ENCODE measurements at regions of chr1 and their contacts with region 1.

Region 1: GRCh38 chr1:165144757-165145397 is 211.6 kb downstream of the LMX1A start:
- DNase-seq: peak; percentile 81
- H3K4me3 Mint-ChIP-seq: no peak overlapping the region
- H3K27ac Mint-ChIP-seq: no peak overlapping the region
- H3K4me1 Mint-ChIP-seq: peaks cover 6% of the 10 kb centered on the region
- H3K27me3 Mint-ChIP-seq: peaks cover 52% of the 10 kb centered on the region
- CTCF ChIP-seq: peak; percentile 91

Region 2: DNA sequence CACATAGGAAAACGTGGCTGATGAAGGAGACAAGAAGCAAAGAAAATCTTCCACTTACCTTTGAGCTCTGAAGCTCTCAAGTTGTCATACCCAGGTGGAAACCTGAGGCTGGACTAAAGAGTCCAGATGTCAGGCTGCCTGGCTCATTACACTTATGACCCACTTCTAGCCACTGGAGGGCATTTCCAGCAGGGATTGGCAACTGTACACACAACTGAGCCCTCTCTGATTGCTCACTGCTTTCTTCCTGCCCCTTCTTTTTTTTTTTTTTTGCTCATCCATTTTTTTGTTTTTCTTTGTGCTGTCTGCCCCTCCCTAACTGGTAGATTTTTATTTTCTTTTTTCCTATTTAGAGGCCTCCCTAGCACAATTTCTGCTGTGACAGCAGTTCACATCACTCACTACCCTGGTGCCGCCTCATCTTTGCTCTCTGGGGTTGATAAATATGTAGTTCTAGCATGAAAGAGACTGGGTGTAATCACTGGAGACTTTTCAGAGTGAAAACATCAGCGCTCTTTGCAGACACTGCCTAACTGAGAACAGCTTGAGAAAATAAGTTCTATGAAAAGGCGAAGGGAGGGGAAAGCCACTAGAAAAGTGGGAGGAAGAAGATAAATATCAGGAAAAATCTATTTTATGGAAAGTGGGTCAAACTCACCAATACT is 1488.7 kb before region 1 on chr1:
- CTCF ChIA-PET with region 1: no interaction called
- POLR2A ChIA-PET with region 1: no interaction called
- intact Hi-C with region 1: no loop called
- DNase-seq: no peak
- H3K4me3 Mint-ChIP-seq: no peak overlapping the region
- H3K27ac Mint-ChIP-seq: no peak overlapping the region
- H3K4me1 Mint-ChIP-seq: no peaks in the 10 kb centered on the region
- H3K27me3 Mint-ChIP-seq: no peaks in the 10 kb centered on the region
- CTCF ChIP-seq: no peak

Region 3: DNA sequence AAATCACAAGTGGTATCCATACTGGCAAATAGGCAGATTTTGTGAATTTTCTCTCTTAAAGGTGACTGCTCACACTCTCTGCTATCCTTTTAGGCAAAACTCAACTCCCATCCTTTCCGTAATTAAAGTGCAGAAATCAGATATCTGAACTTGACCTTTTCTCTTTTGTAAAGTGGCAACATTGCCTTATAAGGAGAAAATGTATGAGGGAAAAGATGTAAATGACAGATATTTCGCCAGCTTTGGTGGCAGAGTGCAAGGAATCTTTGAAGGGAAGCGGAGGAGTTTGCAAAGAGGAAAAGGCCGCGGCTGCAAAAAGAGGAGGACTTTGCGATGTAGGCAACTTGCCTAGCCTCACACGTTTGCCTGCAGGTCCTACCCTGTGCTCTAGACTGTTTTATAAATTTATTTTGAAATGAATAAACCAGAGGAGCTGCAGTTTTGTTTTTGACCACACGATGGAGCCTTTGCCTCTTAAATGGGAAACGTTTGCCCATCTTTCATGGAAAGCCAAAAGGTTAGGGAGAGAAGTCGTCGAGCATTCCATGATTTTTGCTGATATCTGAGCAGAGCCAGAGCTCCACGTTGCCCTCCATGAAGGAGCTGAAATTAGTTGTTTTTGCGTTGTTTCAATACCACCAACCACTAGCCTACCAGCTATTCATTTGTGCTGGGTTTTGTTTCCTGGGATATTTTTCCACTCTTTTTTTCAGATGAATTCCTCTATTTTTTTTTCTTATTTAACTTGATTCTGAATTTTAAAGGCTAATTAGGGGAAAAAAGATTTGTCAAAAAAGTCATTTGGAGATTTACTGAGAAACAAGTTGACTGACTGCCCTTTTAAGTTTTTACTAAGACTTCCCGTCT is 30.6 kb before region 1 on chr1:
- CTCF ChIA-PET with region 1: interaction called, 135 read pairs
- POLR2A ChIA-PET with region 1: interaction called, 3 read pairs
- intact Hi-C with region 1: loop called (anchors 1 kb)
- DNase-seq: peak; percentile 85
- H3K4me3 Mint-ChIP-seq: no peak overlapping the region
- H3K27ac Mint-ChIP-seq: no peak overlapping the region
- H3K4me1 Mint-ChIP-seq: peaks cover 17% of the 10 kb centered on the region
- H3K27me3 Mint-ChIP-seq: peaks cover 16% of the 10 kb centered on the region
- CTCF ChIP-seq: peak; percentile 96

Region 4: GRCh38 chr1:165162671-165163241 is 17.9 kb after region 1 on chr1:
- CTCF ChIA-PET with region 1: interaction called, 89 read pairs
- POLR2A ChIA-PET with region 1: interaction called, 3 read pairs
- intact Hi-C with region 1: no loop called
- DNase-seq: peak; percentile 81
- H3K4me3 Mint-ChIP-seq: no peak overlapping the region
- H3K27ac Mint-ChIP-seq: no peak overlapping the region
- H3K4me1 Mint-ChIP-seq: no peaks in the 10 kb centered on the region
- H3K27me3 Mint-ChIP-seq: peaks cover 14% of the 10 kb centered on the region
- CTCF ChIP-seq: no peak

Region 5: DNA sequence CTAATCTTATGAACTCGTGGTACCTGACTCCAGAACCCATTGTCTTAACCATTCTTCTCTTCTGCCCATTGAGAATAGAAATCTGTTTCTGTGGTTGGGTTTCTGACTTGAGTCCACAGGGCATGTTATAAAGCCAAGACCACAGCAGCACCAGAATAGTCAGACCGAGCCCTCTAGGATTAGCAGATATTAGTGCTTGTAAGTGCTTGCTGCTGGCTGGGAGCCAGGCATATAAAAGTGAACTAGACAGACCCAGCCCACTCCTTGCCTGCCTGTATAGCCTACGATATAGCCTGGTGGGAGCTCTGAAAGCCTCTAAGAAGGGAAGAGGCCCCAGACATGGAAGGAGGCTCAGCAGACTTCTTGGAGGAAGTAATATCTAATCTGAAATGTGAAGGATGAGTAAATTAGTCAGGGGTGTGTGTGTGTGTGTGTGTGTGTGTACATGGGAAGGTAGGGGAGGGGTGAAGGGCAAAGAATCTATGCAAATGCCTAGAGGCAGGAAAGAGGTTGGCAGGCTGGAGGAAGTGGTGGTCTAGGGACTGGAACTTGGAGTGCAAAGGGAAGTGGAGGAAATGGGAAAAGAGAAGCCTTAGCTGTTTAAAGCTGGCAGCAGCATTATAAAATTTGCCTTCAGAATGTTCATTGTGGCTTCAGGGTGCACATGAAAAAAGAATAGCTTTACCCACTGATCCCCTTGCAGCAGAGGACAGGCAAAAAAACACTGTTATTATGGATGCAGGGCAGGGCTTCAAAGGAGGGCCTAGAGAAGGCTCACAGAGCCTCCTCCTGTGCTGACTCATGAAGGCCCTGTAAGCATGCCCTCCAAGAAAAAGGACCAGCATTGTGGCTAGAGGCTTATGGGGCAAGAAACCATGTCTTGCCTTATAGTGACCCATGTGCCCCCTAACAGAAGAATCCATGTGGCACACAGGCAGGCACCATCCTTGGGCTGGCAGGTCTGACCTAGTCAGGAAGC is 42.4 kb after region 1 on chr1:
- CTCF ChIA-PET with region 1: interaction called, 16 read pairs
- POLR2A ChIA-PET with region 1: no interaction called
- intact Hi-C with region 1: no loop called
- DNase-seq: no peak
- H3K4me3 Mint-ChIP-seq: no peak overlapping the region
- H3K27ac Mint-ChIP-seq: no peak overlapping the region
- H3K4me1 Mint-ChIP-seq: no peaks in the 10 kb centered on the region
- H3K27me3 Mint-ChIP-seq: no peaks in the 10 kb centered on the region
- CTCF ChIP-seq: no peak

Region 6: DNA sequence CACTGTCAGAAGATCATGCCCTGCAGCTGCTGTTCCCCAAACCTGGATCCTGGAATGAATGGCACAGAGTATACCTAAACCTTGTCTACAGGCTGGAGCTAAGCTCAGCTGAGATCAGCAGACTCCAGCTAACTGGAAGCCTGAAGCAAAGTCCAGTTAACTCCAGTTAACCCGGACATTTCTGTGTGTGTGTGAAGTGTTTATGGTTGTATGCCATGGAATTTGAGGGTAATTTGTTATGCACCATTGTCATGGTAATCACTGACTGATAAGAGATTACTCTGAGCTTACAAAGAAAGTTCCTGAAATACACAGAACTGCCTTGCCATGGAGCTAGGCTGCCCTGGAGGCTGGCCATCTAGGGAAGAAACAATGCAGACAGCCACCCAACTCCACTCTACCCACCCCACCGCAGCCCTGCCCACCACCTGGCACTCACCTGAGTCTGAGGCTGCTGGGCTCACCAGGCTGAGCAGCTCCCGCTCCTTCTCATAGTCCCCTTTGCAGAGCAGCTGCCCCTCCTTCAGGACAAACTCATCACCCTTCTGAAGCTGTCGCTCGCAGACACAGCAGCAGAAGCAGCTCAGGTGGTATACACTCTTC is 104.2 kb after region 1 on chr1:
- CTCF ChIA-PET with region 1: interaction called, 16 read pairs
- POLR2A ChIA-PET with region 1: no interaction called
- intact Hi-C with region 1: no loop called
- DNase-seq: no peak
- H3K4me3 Mint-ChIP-seq: no peak overlapping the region
- H3K27ac Mint-ChIP-seq: no peak overlapping the region
- H3K4me1 Mint-ChIP-seq: no peaks in the 10 kb centered on the region
- H3K27me3 Mint-ChIP-seq: peaks cover 48% of the 10 kb centered on the region
- CTCF ChIP-seq: no peak

Region 7: DNA sequence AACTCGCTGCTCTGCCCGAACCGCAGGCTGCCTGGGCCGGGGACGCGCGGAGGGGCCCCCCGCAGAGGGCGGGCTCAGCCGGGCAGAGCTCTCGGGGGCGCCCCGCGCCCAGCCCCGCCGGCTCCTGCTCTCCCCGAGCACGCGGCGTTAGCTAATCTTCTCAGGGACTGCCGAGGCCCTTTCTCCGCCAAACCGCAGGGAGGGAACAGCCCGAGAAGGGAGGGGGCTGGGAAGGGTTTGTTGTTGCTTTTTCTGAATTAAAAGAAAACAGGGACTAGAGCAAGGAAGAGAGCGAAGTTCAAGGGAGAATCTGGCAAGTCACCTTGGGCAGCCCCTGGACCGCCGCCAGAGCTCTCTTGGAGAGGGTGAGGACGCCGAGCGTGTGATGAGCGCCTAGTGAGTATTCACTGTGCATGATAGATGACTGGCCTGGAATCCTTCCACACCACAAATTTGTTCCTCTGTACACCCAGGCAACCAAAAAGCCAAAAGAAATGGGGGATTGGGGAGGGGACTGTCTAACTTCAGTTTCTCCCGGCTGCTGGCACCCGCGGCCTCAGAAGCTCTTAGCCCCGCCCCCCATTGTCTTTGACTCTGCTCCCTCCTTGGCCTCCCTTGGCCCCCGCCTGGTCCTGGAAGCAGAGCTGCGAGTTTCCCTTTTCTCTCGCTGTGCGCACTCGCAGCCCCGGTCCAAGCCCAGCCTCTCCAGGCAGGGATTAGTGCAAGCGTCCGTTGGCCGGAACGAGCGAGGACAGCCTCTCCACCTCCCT is 231.3 kb after region 1 on chr1:
- CTCF ChIA-PET with region 1: interaction called, 334 read pairs
- POLR2A ChIA-PET with region 1: interaction called, 3 read pairs
- intact Hi-C with region 1: no loop called
- DNase-seq: peak; percentile 99
- H3K4me3 Mint-ChIP-seq: peak overlapping the region; percentile 63
- H3K27ac Mint-ChIP-seq: peak overlapping the region; percentile 71
- H3K4me1 Mint-ChIP-seq: peaks cover 20% of the 10 kb centered on the region
- H3K27me3 Mint-ChIP-seq: peaks cover 18% of the 10 kb centered on the region
- CTCF ChIP-seq: no peak

Region 8: DNA sequence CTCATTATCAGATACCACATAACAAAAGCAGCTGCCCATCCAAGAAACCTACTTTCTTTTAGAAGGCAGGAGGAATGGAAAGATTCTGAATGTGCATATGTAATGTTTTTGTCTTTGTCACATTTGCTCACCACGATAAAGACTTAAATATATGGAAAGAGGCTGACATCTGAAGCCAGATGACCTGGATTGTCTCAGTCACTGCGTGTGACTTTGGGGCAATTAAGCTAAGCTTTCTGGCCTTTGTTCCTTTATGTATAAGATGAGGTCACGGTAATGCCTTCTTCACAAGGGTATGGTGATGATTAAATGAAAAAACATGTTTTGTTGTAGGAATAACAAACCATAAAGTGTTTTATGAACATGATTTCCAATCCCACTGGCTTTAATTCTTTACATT is 441.6 kb after region 1 on chr1:
- CTCF ChIA-PET with region 1: interaction called, 26 read pairs
- POLR2A ChIA-PET with region 1: no interaction called
- intact Hi-C with region 1: no loop called
- DNase-seq: no peak
- H3K4me3 Mint-ChIP-seq: no peak overlapping the region
- H3K27ac Mint-ChIP-seq: no peak overlapping the region
- H3K4me1 Mint-ChIP-seq: no peaks in the 10 kb centered on the region
- H3K27me3 Mint-ChIP-seq: peaks cover 59% of the 10 kb centered on the region
- CTCF ChIP-seq: no peak